CD8-positive, alpha-beta T cell (primary cell): ENCODE measurements at regions of chr12 and their contacts with region 1.

Region 1: DNA sequence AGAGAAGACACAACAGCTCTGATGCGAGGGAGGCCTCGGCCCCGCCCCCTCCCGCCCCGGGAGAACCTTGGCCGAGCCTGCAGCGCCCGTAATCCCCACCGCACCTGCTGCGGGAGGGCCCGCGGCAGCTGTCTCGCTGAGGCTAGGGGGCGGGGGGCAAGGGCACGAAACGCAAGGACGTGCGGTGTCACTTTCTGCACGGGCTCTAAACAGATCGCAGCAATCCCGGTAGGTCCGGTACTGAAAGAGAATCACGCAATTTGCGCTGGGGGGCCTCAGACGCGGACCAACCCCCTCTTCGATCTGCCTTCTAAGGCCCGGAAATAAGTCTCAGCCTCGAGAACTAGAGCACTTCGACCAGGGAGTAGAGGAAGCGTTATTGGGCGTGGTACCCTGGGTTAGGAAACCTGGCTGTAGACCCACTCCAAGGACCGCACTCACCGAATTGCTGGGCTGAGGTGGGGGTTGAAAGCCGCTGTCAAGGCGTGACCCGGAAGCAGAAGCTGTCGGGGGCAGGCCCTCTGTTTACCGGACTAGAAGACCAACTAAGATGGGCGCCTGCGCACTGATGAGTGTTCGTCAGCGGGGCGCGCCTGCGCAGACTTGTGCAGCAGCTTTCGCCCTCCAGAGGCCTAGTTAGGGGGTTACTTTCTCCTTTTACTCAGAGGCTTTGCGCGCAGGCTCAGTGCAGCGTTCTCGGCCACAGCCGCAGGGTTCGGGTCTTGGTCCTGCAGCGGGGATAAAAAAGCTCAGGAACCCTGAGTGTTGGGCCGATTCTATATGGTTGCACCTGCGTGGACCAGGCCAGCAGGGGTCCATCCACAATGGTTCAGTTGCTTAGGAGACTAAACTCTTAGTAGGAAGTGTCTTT is at the start of gene ASB8:
- DNase-seq: peak; percentile 98 to 99 (median 99)
- ATAC-seq: peak; percentile 95
- H3K4me3 ChIP-seq: peak within 1 kb of the TSS; percentile 92 to 97
- H3K4me3 Mint-ChIP-seq: peak within 1 kb of the TSS; percentile 98
- H3K27ac ChIP-seq: peak within 1 kb of the TSS; percentile 83 to 87
- H3K27ac Mint-ChIP-seq: peak within 1 kb of the TSS; percentile 99
- H3K4me1 ChIP-seq: peaks cover 15% of the 10 kb centered on the region
- H3K4me1 Mint-ChIP-seq: peaks cover 48% of the 10 kb centered on the region
- H3K27me3 ChIP-seq: no peaks in the 10 kb centered on the region
- H3K27me3 Mint-ChIP-seq: no peaks in the 10 kb centered on the region
- CTCF ChIP-seq: peak; percentile 63
- total RNA-seq, gene ASB8: 54.7 to 55.6 TPM

Region 2: GRCh38 chr12:47819896-47820630 is 337.2 kb before region 1 on chr12 and contains the start of gene HDAC7:
- CTCF ChIA-PET with region 1: no interaction called
- POLR2A ChIA-PET with region 1: no interaction called
- intact Hi-C with region 1: loop called in 1 of 2 experiments (anchors 5 kb)
- DNase-seq: peak; percentile 39 to 85 (median 73)
- ATAC-seq: peak; percentile 51
- H3K4me3 ChIP-seq: peak within 1 kb of the TSS; percentile 78 to 83
- H3K4me3 Mint-ChIP-seq: peak within 1 kb of the TSS; percentile 95
- H3K27ac ChIP-seq: peak within 1 kb of the TSS; percentile 78 to 81
- H3K27ac Mint-ChIP-seq: peak within 1 kb of the TSS; percentile 96
- H3K4me1 ChIP-seq: peaks cover 80% of the 10 kb centered on the region
- H3K4me1 Mint-ChIP-seq: peaks cover 87% of the 10 kb centered on the region
- H3K27me3 ChIP-seq: no peaks in the 10 kb centered on the region
- H3K27me3 Mint-ChIP-seq: no peaks in the 10 kb centered on the region
- CTCF ChIP-seq: no peak
- total RNA-seq, gene HDAC7: 87.3 to 91.4 TPM

Region 3: DNA sequence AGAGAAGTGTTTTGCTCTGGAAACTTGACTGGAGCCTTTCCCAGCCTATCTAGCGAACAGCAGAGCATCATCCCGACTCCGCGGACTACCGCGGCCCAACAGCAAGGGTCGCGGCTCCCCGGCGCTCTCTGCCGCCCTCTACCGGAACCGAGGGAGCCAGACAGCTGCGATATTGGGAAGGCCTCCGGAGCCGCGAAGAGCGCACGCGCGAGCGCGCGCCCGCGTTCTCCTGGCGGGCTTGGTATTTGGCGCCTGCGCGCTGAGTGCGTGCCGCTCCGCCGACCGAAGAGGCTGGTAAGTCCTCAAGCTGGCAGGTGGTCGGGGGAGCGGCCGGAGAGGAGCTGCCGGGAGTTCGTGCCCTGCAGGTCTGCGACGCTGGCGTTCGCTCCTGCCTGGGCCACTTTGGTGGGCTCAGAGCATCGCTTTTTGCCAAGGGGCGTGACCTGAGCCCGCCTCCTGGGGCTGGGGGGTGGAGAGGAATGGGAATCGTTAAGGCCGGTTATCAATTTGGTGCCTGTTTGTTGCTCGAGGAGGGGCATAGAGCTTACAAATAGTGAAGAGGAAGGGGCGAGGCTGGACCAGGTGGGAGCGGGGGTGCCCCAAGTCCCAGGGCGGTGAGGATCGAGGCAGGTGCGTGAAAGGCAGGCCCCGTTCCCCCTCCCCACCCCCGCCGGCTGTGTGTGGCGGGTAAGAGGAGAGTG is 193.8 kb before region 1 on chr12 and contains the start of gene TMEM106C:
- CTCF ChIA-PET with region 1: interaction called, 3 read pairs
- POLR2A ChIA-PET with region 1: no interaction called
- intact Hi-C with region 1: loop called (anchors 2 kb)
- DNase-seq: peak; percentile 82 to 96 (median 90)
- ATAC-seq: peak; percentile 98
- H3K4me3 ChIP-seq: peak within 1 kb of the TSS; percentile 67 to 76
- H3K4me3 Mint-ChIP-seq: peak within 1 kb of the TSS; percentile 97
- H3K27ac ChIP-seq: peak within 1 kb of the TSS in 1 of 2 experiments; percentile 43
- H3K27ac Mint-ChIP-seq: peak within 1 kb of the TSS; percentile 83
- H3K4me1 ChIP-seq: peaks cover 13% of the 10 kb centered on the region
- H3K4me1 Mint-ChIP-seq: peaks cover 25% of the 10 kb centered on the region
- H3K27me3 ChIP-seq: no peaks in the 10 kb centered on the region
- H3K27me3 Mint-ChIP-seq: peaks cover 11% of the 10 kb centered on the region
- CTCF ChIP-seq: peak; percentile 93
- total RNA-seq, gene TMEM106C: 12.1 to 13.1 TPM

Region 4: DNA sequence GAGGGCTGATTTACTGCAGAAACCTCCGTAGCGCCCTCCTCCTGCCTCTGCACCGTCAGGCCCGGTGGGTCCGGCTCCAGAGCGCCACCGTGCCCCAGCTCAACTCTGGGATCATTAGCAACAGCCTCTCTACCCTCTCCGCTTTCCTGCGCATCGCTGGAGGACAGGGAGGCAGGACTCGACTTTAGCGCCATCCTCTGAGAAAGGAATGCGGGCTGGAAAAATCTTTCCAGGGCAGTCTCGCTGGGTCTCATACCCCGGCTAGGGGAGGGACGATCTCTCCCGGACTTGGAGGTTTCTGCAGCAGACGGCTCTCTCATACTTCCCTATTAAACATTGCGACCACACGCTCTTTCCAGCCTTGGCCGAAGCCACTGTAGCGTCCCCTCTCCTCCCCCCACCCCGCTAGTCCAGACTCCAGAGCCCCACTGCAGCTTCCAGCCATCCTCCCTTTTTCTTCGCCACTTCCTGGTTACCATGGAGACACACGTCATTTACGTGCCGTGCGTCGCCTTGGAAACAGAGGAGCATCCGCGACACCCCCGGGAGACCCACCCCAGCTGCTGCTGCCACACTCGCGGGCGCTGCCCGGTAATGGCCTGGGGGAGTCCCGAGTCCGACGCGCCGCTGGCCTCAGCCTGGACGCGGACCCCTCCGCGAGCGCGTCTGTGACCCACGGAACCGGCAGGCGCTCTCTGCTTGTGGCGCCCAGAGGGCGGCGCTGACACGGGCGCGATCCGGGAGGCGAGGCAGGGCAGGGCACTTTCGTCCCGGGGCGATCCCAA is 26.0 kb after region 1 on chr12 and contains the start of gene CCDC184:
- CTCF ChIA-PET with region 1: interaction called, 6 read pairs
- POLR2A ChIA-PET with region 1: interaction called, 6 read pairs
- intact Hi-C with region 1: loop called (anchors 1 kb)
- DNase-seq: peak; percentile 48 to 93 (median 74)
- ATAC-seq: peak; percentile 80
- H3K4me3 ChIP-seq: peak within 1 kb of the TSS; percentile 75 to 99
- H3K4me3 Mint-ChIP-seq: peak within 1 kb of the TSS; percentile 93
- H3K27ac ChIP-seq: peak within 1 kb of the TSS; percentile 50 to 85
- H3K27ac Mint-ChIP-seq: peak within 1 kb of the TSS; percentile 43
- H3K4me1 ChIP-seq: peaks cover 14% of the 10 kb centered on the region
- H3K4me1 Mint-ChIP-seq: peaks cover 6% of the 10 kb centered on the region
- H3K27me3 ChIP-seq: peaks cover 6 to 12% of the 10 kb centered on the region in 2 experiments
- H3K27me3 Mint-ChIP-seq: peaks cover 29% of the 10 kb centered on the region
- CTCF ChIP-seq: peak; percentile 54
- total RNA-seq, gene CCDC184: 0.90 to 1.3 TPM

Region 5: GRCh38 chr12:48350249-48351021 is 193.2 kb after region 1 on chr12 and contains the start of gene ZNF641:
- CTCF ChIA-PET with region 1: no interaction called
- POLR2A ChIA-PET with region 1: no interaction called
- intact Hi-C with region 1: loop called in 1 of 2 experiments (anchors 1 kb)
- DNase-seq: peak; percentile 54 to 93 (median 81)
- ATAC-seq: peak; percentile 87
- H3K4me3 ChIP-seq: peak within 1 kb of the TSS; percentile 86 to 88
- H3K4me3 Mint-ChIP-seq: peak within 1 kb of the TSS; percentile 92
- H3K27ac ChIP-seq: peak within 1 kb of the TSS; percentile 71 to 88
- H3K27ac Mint-ChIP-seq: peak within 1 kb of the TSS; percentile 95
- H3K4me1 ChIP-seq: peaks cover 26% of the 10 kb centered on the region
- H3K4me1 Mint-ChIP-seq: peaks cover 44% of the 10 kb centered on the region
- H3K27me3 ChIP-seq: no peaks in the 10 kb centered on the region
- H3K27me3 Mint-ChIP-seq: no peaks in the 10 kb centered on the region
- CTCF ChIP-seq: no peak
- total RNA-seq, gene ZNF641: 12.1 to 12.3 TPM

Region 6: DNA sequence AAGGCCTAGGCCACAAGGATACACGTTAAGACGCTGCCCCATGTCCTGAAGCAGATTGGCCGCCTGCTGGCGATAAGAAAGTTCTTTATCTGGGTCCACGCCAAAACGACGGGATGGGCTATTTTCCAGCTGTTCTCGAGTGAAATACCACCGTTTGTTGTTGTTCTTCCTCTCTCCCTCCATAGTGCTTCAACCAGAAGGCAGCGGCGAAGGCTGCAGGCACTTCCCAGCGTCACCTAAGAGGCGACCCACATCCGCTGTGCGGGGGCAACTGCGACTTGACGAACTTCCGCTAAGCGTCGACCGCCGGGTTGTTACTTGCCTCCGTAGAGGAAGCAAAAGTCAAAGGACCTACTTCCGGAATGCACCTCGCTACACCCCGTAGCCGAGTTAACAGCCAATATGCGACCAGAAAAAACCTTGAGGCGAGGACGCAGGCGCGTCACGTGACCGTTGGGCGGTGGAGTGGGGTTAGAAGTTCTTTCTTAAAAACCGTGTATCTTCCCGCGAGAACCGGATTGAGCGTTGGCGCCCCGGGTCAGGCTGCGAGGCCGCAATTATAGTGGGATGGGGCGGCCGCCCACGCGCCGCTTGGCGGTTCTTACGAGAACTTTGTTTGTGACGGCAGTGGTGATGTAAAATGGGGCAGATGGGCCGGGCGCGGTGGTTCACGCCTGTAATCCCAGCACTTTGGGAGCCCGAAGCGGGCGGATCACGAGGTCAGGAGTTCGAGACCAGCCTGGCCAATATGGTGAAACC is 559.4 kb after region 1 on chr12 and contains the start of gene CCNT1:
- CTCF ChIA-PET with region 1: no interaction called
- POLR2A ChIA-PET with region 1: no interaction called
- intact Hi-C with region 1: loop called in 1 of 2 experiments (anchors 2 kb)
- DNase-seq: peak; percentile 96 to 100 (median 97)
- ATAC-seq: peak; percentile 86
- H3K4me3 ChIP-seq: peak within 1 kb of the TSS; percentile 84
- H3K4me3 Mint-ChIP-seq: peak within 1 kb of the TSS; percentile 92
- H3K27ac ChIP-seq: peak within 1 kb of the TSS; percentile 96 to 99
- H3K27ac Mint-ChIP-seq: peak within 1 kb of the TSS; percentile 98
- H3K4me1 ChIP-seq: peaks cover 30% of the 10 kb centered on the region
- H3K4me1 Mint-ChIP-seq: peaks cover 40% of the 10 kb centered on the region
- H3K27me3 ChIP-seq: no peaks in the 10 kb centered on the region
- H3K27me3 Mint-ChIP-seq: no peaks in the 10 kb centered on the region
- CTCF ChIP-seq: no peak
- total RNA-seq, gene CCNT1: 127 to 132 TPM